ENCODE measurements at regions of chr17 and their contacts with region 1.

Region 1: DNA sequence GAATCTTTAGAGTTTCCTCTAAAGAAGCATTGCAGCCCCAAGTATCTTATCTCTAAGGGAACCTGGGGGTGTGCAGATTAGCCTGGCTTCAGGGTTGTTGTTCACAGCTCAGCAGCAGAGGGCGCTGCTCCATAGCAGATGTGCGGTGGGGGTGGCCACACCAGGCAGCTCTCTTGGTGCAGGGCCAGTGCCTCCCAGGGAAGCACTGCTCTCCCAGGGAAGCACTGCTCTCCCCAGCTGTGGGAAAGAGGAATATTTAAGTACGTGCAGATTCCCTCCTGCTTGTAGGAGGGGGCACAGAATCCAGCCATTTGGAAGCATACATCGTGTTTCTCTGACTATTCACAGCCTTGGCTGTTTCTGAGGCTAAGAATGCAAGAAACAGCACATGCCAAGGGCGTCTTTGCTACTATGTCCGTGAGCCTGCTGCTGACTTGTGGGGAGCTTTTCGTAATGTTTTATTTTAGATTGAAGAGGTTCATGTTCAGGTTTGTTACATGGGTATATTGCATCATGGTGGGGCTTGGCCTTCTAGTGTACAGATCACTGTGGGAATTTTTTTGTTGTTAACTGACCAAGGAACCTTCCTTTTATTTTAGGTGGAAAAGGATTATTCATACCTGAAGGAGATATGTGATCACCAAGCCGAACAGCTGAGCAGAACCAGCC is 217.8 kb downstream of the SPECC1 start:
- DNase-seq: peak; percentile 84
- ATAC-seq: peak; percentile 90
- H3K4me3 ChIP-seq: no peak overlapping the region
- H3K27ac ChIP-seq: no peak overlapping the region
- H3K4me1 ChIP-seq: peaks cover 6% of the 10 kb centered on the region; the same call in 1 of the 2 replicates
- H3K27me3 ChIP-seq: no peaks in the 10 kb centered on the region
- CTCF ChIP-seq: peak; percentile 94

Region 2: DNA sequence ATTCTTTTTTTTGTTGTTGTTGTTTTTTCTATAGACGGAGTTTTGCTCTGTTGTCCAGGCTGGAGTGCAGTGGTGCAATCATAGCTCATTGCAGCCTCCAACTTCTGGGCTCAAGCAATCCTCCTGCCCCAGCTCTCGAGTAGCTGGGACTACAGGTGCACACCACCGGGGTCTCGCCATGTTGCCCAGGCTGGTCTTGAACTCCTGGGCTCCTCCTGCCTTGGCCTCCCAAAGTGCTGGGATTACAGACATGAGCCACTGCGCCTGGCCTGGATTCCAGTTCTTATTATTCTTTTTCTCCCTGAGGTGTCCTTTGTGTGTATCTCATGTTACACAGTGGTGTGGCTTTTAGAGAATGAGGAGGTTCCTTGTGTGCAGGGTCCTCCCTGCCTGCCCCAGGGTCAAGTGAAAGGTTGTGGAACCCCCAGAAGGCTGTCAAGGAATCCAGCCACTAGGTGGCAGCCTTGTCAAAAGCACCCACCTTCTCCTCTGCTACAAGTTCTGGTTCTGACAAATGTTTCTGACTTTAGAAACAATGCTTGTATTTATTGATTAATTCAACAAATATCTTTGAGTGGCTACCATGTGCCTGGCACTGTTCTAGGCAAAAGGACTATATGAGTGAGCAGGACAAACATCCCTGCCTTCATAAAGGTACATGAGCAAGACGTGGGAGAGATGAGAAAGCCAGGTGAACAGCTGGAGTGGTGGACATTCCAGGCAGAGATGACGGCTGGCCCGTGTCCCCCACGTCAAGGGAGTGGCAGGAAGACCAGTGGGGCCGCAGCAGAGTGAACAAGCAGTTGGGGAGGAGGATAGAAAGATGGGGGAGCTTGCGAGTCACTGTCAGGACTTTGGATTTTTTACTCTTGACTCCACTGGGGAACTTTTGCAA is 105.3 kb before region 1 on chr17:
- CTCF ChIA-PET with region 1: no interaction called
- POLR2A ChIA-PET with region 1: no interaction called
- intact Hi-C with region 1: loop called (anchors 1 kb)
- DNase-seq: peak; percentile 71
- ATAC-seq: peak; percentile 67
- H3K4me3 ChIP-seq: no peak overlapping the region
- H3K27ac ChIP-seq: no peak overlapping the region
- H3K4me1 ChIP-seq: peaks cover 5% of the 10 kb centered on the region; the same call in 1 of the 2 replicates
- H3K27me3 ChIP-seq: no peaks in the 10 kb centered on the region
- CTCF ChIP-seq: peak; percentile 98

Region 3: GRCh38 chr17:20315821-20316220 is 88.9 kb after region 1 on chr17:
- CTCF ChIA-PET with region 1: interaction called, 3 read pairs
- POLR2A ChIA-PET with region 1: no interaction called
- intact Hi-C with region 1: loop called (anchors 2 kb)
- DNase-seq: no peak
- ATAC-seq: no peak
- H3K4me3 ChIP-seq: no peak overlapping the region
- H3K27ac ChIP-seq: no peak overlapping the region
- H3K4me1 ChIP-seq: no peaks in the 10 kb centered on the region
- H3K27me3 ChIP-seq: no peaks in the 10 kb centered on the region
- CTCF ChIP-seq: no peak

Measured in PC-3 (cell line).